Activated CD4-positive, alpha-beta T cell treated with anti-CD3 and anti-CD28 coated beads for 36 hours (primary cell): ENCODE measurements at regions of chr19 and their contacts with region 1.

Region 1: GRCh38 chr19:8321060-8321985 is at the starts of genes NDUFA7 and RPS28:
- DNase-seq: peak; percentile 99
- ATAC-seq: peak; percentile 94
- H3K4me3 Mint-ChIP-seq: peak within 1 kb of the TSS; percentile 97
- H3K27ac Mint-ChIP-seq: peak within 1 kb of the TSS; percentile 97
- H3K4me1 Mint-ChIP-seq: peaks cover 22% of the 10 kb centered on the region
- H3K27me3 Mint-ChIP-seq: no peaks in the 10 kb centered on the region
- total RNA-seq, gene NDUFA7: 90.9 to 112 TPM
- total RNA-seq, gene RPS28: 1,994 to 2,316 TPM

Region 2: GRCh38 chr19:8005534-8006256 is 315.6 kb before region 1 on chr19 and contains the start of gene ELAVL1:
- CTCF ChIA-PET with region 1: no interaction called
- POLR2A ChIA-PET with region 1: no interaction called
- intact Hi-C with region 1: loop called in 1 of 2 experiments (anchors 1 kb)
- DNase-seq: peak; percentile 95
- ATAC-seq: peak; percentile 93
- H3K4me3 Mint-ChIP-seq: peak within 1 kb of the TSS; percentile 95
- H3K27ac Mint-ChIP-seq: peak within 1 kb of the TSS; percentile 94
- H3K4me1 Mint-ChIP-seq: peaks cover 36% of the 10 kb centered on the region
- H3K27me3 Mint-ChIP-seq: no peaks in the 10 kb centered on the region
- total RNA-seq, gene ELAVL1: 149 to 184 TPM

Region 3: DNA sequence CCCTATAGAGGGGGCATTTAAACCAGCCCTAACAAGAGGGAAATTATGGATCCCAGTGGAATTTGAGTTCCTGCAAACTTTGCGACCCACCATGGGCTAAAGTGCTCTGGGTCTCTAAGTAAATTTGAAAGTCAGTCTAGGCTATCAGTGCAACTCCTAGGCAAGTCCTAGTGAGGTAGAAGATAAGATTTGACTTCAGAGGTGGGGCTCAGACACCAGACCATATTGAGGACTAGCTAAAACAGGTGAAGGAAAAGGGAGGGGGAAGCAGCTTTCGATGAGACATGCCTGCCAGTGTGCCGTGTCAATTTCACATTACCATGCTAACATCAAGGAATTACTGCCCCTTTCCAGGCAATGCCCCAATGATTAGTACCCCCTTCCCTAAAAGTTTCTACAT is 51.6 kb before region 1 on chr19:
- CTCF ChIA-PET with region 1: interaction called, 5 read pairs
- POLR2A ChIA-PET with region 1: no interaction called
- intact Hi-C with region 1: loop called in 1 of 2 experiments (anchors 2 kb)
- DNase-seq: no peak
- ATAC-seq: no peak
- H3K4me3 Mint-ChIP-seq: peak overlapping the region; percentile 77
- H3K27ac Mint-ChIP-seq: peak overlapping the region; percentile 97
- H3K4me1 Mint-ChIP-seq: peaks cover 18% of the 10 kb centered on the region
- H3K27me3 Mint-ChIP-seq: no peaks in the 10 kb centered on the region

Region 4: DNA sequence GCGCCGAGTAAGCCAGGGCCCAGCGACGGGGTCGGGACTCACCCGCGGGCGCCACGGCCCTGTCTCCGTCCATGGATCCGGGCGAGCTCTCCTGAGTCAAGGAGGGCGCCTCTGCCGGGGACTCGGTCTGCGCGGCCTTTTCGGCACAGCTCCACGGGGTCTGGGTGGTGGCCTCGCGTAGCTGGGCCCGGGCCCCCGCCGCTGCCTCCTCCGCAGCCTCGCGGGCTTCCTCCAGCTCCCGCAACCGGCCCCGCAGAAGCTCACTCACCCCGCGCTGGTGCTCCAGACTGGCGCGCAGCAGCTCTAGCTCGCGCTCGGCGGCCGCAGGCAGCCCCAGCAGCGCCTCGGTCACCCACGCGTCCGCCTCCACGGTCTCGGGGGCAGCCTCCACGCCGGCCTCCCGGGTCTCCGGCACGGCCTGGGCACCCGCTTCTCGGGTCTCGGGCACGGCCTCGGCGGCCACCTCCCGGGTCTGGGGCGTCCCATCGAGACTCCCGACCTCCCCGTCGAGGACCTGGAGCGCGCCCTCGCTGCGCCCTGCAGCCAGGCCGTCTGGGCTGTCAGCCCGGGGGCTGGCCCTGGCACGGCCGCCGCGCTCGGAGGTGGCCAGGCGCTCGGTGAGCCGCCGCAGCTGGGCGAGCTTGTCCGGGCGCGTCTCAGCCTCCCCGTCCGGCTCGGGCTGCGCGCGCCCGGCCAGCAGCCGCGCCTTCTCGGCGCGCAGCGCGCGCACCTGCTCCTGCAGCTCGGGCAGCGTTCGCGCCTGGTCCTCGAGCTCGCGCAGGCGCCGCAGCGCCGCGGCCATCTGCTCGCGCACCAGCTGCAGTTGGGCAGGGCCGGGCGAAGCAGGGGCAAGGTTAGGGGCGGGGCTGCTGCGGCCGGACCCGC is 13.4 kb after region 1 on chr19:
- CTCF ChIA-PET with region 1: interaction called, 20 read pairs
- POLR2A ChIA-PET with region 1: no interaction called
- intact Hi-C with region 1: no loop called
- DNase-seq: peak; percentile 61
- ATAC-seq: peak; percentile 70
- H3K4me3 Mint-ChIP-seq: no peak overlapping the region
- H3K27ac Mint-ChIP-seq: no peak overlapping the region
- H3K4me1 Mint-ChIP-seq: peaks cover 8% of the 10 kb centered on the region
- H3K27me3 Mint-ChIP-seq: peaks cover 25% of the 10 kb centered on the region

Region 5: DNA sequence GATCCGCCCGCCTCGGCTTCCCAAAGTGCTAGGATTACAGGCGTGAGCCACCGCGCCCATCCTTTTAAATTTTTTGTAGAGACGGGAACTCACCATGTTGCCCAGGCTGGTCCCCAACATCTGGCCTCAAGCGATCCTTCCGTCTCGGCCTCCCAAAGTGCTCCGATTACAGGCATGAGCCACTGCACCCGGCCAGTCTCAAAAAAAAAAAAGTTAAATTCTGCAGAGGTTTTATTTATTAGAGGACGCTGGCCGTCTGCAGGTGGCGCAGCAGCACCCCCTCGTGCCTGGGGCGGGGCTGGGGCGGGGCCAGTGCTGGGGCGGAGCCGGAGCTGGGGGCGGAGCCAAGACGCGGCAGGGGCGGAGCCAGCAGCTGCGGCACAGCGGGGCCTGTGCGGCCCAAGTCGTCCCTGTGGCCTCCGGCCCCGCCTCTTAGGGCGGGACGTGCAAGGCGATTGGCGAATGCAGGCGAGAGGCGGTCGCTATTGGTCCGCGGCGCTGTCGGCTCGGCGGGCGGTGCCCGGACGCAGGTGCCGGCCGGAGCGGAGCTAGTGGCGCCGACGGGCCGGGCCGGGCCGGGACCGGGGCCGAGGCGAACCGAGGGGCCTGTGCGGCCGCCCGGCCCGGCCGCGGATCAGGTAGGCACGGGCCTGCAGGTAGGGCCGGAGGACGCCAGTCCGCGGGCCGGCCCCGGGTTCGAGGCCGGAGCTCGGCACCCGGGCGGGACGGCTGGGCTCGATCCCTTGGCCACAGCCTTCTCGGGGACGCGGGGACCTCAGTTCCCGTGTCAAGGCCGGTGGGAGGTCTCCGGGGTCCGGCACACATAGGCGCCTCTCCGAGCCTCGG is 91.7 kb after region 1 on chr19 and contains the start of gene MARCHF2:
- CTCF ChIA-PET with region 1: no interaction called
- POLR2A ChIA-PET with region 1: no interaction called
- intact Hi-C with region 1: loop called in 1 of 2 experiments (anchors 1 kb)
- DNase-seq: peak; percentile 97
- ATAC-seq: peak; percentile 100
- H3K4me3 Mint-ChIP-seq: peak within 1 kb of the TSS; percentile 50
- H3K27ac Mint-ChIP-seq: no peak within 1 kb of the TSS
- H3K4me1 Mint-ChIP-seq: peaks cover 5% of the 10 kb centered on the region
- H3K27me3 Mint-ChIP-seq: no peaks in the 10 kb centered on the region
- total RNA-seq, gene MARCHF2: 9.1 to 10.1 TPM